ENCODE measurements at regions of chr5 and their contacts with region 1.

Region 1: GRCh38 chr5:113513384-113514288 is at the start of gene YTHDC2:
- DNase-seq: peak; percentile 79 to 89 (median 87)
- ATAC-seq: peak; percentile 97
- H3K4me3 ChIP-seq: peak within 1 kb of the TSS; percentile 85
- H3K4me3 Mint-ChIP-seq: peak within 1 kb of the TSS; percentile 86 to 98 (median 94)
- H3K27ac ChIP-seq: peak within 1 kb of the TSS; percentile 94
- H3K27ac Mint-ChIP-seq: peak within 1 kb of the TSS; percentile 86 to 98 (median 97)
- H3K4me1 ChIP-seq: peaks cover 6 to 9% of the 10 kb centered on the region in 2 donors
- H3K4me1 Mint-ChIP-seq: peaks cover 27 to 51% (median 44%) of the 10 kb centered on the region in 7 donors
- H3K27me3 ChIP-seq: no peaks in the 10 kb centered on the region
- H3K27me3 Mint-ChIP-seq: peaks cover 12 to 19% (median 13%) of the 10 kb centered on the region in 5 donors
- total RNA-seq, gene YTHDC2: 27.7 to 53.6 (median 49.2) TPM

Region 2: DNA sequence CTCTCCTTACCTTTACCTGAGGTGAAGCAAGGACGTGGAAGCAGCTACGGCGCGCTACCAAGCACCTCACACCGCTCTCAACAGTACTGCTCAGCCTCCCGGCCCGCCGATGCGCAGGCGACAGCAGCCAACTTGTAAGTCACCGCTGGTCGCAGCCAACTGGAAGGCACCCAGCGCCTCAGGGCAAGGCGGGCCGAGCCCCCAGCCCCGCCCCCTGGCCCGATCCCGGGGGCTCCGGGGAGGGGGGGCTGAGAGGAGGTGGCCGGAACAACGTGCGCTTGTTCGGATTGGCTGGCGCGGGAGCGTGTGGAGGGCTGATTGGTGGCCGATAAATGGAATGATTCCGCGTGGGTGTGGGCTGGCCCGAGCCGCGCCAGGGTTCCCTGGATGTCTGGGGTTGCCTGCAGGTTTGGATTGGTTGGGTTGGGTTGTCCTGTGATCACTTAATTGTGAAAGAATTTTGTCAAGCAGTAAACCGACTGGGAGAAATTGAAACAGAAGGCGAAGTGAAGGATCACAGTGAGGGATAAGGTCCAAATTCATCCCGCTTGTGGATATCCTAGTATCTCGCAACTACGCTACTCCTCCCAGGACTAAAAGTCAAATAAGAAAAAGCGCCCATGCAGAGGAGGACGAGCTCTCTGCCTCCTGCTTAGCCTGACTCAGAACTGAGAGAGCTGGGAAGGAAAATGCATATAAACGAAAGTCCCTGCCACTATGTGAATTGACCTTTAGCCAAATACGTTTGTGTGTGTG is 2001.1 kb before region 1 on chr5 and contains the start of gene STARD4:
- CTCF ChIA-PET with region 1: no interaction called
- POLR2A ChIA-PET with region 1: no interaction called
- intact Hi-C with region 1: loop called in 1 of 2 experiments (anchors 10 kb)
- DNase-seq: peak; percentile 79 to 94 (median 92)
- ATAC-seq: peak; percentile 97
- H3K4me3 ChIP-seq: peak within 1 kb of the TSS; percentile 81
- H3K4me3 Mint-ChIP-seq: peak within 1 kb of the TSS; percentile 91 to 100 (median 98)
- H3K27ac ChIP-seq: peak within 1 kb of the TSS; percentile 73
- H3K27ac Mint-ChIP-seq: peak within 1 kb of the TSS; percentile 90 to 98 (median 94)
- H3K4me1 ChIP-seq: peaks cover 0 to 14% of the 10 kb centered on the region in 2 donors
- H3K4me1 Mint-ChIP-seq: peaks cover 17 to 53% (median 28%) of the 10 kb centered on the region in 7 donors
- H3K27me3 ChIP-seq: no peaks in the 10 kb centered on the region
- H3K27me3 Mint-ChIP-seq: no peaks in the 10 kb centered on the region
- total RNA-seq, gene STARD4: 11.1 to 70.8 (median 17.1) TPM

Region 3: GRCh38 chr5:113294311-113295110 is 219.1 kb before region 1 on chr5:
- CTCF ChIA-PET with region 1: no interaction called
- POLR2A ChIA-PET with region 1: no interaction called
- intact Hi-C with region 1: loop called (anchors 1 to 2 kb)
- DNase-seq: peak; percentile 30 to 72 (median 62)
- ATAC-seq: peak; percentile 92
- H3K4me3 ChIP-seq: peak overlapping the region; percentile 64
- H3K4me3 Mint-ChIP-seq: peak overlapping the region; percentile 88 to 96 (median 92)
- H3K27ac ChIP-seq: peak overlapping the region; percentile 43
- H3K27ac Mint-ChIP-seq: peak overlapping the region in 6 of 9 donors; percentile 21 to 86 (median 46)
- H3K4me1 ChIP-seq: peaks cover 8 to 11% of the 10 kb centered on the region in 2 donors
- H3K4me1 Mint-ChIP-seq: peaks cover 13 to 28% (median 21%) of the 10 kb centered on the region in 7 donors
- H3K27me3 ChIP-seq: no peaks in the 10 kb centered on the region
- H3K27me3 Mint-ChIP-seq: peaks cover 30 to 82% (median 59%) of the 10 kb centered on the region in 5 donors

Region 4: GRCh38 chr5:113378959-113379541 is 134.6 kb before region 1 on chr5:
- CTCF ChIA-PET with region 1: no interaction called
- POLR2A ChIA-PET with region 1: no interaction called
- intact Hi-C with region 1: loop called (anchors 1 kb)
- DNase-seq: peak; percentile 8 to 57 (median 41)
- ATAC-seq: peak; percentile 74
- H3K4me3 ChIP-seq: no peak overlapping the region
- H3K4me3 Mint-ChIP-seq: peak overlapping the region; percentile 52 to 78 (median 65)
- H3K27ac ChIP-seq: no peak overlapping the region
- H3K27ac Mint-ChIP-seq: peak overlapping the region in 2 of 9 donors; percentile 8 to 31
- H3K4me1 ChIP-seq: peaks cover 21 to 25% of the 10 kb centered on the region in 2 donors
- H3K4me1 Mint-ChIP-seq: peaks cover 30 to 59% (median 52%) of the 10 kb centered on the region in 7 donors
- H3K27me3 ChIP-seq: no peaks in the 10 kb centered on the region
- H3K27me3 Mint-ChIP-seq: peaks cover 14 to 32% (median 27%) of the 10 kb centered on the region in 5 donors

Region 5: GRCh38 chr5:113526421-113526820 is 12.8 kb after region 1 on chr5:
- CTCF ChIA-PET with region 1: no interaction called
- POLR2A ChIA-PET with region 1: interaction called, 9 read pairs
- intact Hi-C with region 1: loop called in 1 of 2 experiments (anchors 2 kb)
- DNase-seq: no peak
- ATAC-seq: no peak
- H3K4me3 ChIP-seq: no peak overlapping the region
- H3K4me3 Mint-ChIP-seq: no peak overlapping the region
- H3K27ac ChIP-seq: no peak overlapping the region
- H3K27ac Mint-ChIP-seq: no peak overlapping the region
- H3K4me1 ChIP-seq: peaks cover 6 to 17% of the 10 kb centered on the region in 2 donors
- H3K4me1 Mint-ChIP-seq: peaks cover 2 to 54% (median 37%) of the 10 kb centered on the region in 7 donors
- H3K27me3 ChIP-seq: no peaks in the 10 kb centered on the region
- H3K27me3 Mint-ChIP-seq: no peaks in the 10 kb centered on the region

Region 6: DNA sequence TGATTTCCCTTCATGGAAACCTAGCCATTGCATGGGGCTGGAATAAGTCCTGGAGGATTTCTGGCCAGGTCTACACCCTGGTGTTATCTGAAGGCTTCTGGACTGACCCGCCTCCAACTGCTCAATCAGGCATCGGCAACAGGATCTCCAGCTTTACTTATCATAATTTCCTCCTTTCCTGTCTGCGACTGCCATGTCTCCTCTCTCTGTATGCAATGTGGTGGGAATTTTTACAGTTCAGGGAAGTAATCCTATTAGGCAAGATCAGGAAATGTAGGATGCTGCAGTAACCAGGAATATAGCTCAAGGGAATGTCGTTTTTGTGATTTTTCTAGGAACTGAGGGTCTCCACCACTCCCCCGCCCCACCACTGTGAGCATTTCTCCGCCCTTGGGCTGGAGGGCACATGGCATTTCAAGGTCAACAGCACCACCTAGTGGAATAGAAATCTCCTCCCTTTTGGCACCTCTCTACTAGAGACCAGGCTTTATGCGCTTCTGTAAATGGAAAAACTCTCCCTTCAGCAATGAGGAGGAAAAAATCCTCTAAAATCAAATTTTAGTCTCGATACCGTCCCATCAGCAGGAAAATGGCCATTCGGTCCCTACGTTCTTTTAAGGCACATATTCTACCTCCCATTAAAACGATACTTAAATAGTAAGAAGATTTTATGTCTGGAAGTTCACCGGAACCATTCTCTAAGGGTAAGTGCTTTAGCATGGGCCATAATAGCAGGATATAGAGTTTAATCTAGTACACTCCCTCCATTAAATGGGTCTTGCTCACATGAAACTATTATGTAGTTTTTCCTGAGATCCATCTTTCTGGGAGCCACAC is 92.9 kb after region 1 on chr5:
- CTCF ChIA-PET with region 1: no interaction called
- POLR2A ChIA-PET with region 1: no interaction called
- intact Hi-C with region 1: loop called in 1 of 2 experiments (anchors 2 kb)
- DNase-seq: peak in 8 of 9 donors; percentile 29 to 68 (median 56)
- ATAC-seq: peak; percentile 89
- H3K4me3 ChIP-seq: no peak overlapping the region
- H3K4me3 Mint-ChIP-seq: no peak overlapping the region
- H3K27ac ChIP-seq: no peak overlapping the region
- H3K27ac Mint-ChIP-seq: no peak overlapping the region
- H3K4me1 ChIP-seq: no peaks in the 10 kb centered on the region
- H3K4me1 Mint-ChIP-seq: peaks cover 4 to 10% (median 6%) of the 10 kb centered on the region in 7 donors
- H3K27me3 ChIP-seq: no peaks in the 10 kb centered on the region
- H3K27me3 Mint-ChIP-seq: peaks cover 13 to 38% (median 27%) of the 10 kb centered on the region in 5 donors

Measured in naive thymus-derived CD4-positive, alpha-beta T cell (primary cell).